CD4-positive, alpha-beta T cell (primary cell): ENCODE measurements at regions of chr6 and their contacts with region 1.

Region 1: DNA sequence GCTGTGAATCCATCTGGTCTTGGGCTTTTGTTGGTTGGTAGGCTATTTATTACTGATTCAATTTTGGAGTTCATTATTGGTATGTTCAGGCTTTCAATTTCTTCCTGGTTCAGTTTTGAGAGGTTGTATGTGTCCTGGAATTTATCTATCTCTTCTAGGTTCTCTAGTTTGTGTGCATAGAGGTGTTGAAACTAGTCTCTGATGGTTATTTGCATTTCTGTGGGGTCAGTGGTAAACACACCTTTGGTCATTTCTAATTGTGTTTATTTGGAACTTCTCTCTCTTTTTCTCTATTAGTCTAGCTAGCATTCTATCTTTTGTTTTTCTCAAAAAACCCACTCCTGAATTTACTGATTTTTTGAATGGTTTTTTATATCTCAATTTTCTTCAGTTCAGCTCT is 70.1 kb upstream of the IRAK1BP1 start:
- DNase-seq: no peak
- ATAC-seq: no peak
- H3K4me3 ChIP-seq: no peak overlapping the region
- H3K4me3 Mint-ChIP-seq: no peak overlapping the region
- H3K27ac ChIP-seq: no peak overlapping the region
- H3K27ac Mint-ChIP-seq: no peak overlapping the region
- H3K4me1 ChIP-seq: no peaks in the 10 kb centered on the region
- H3K4me1 Mint-ChIP-seq: no peaks in the 10 kb centered on the region
- H3K27me3 ChIP-seq: no peaks in the 10 kb centered on the region
- H3K27me3 Mint-ChIP-seq: no peaks in the 10 kb centered on the region
- CTCF ChIP-seq: no peak

Region 2: GRCh38 chr6:77324866-77325265 is 1472.4 kb before region 1 on chr6:
- CTCF ChIA-PET with region 1: no interaction called
- POLR2A ChIA-PET with region 1: no interaction called
- intact Hi-C with region 1: no loop called
- DNase-seq: no peak
- ATAC-seq: no peak
- H3K4me3 ChIP-seq: no peak overlapping the region
- H3K4me3 Mint-ChIP-seq: no peak overlapping the region
- H3K27ac ChIP-seq: no peak overlapping the region
- H3K27ac Mint-ChIP-seq: no peak overlapping the region
- H3K4me1 ChIP-seq: no peaks in the 10 kb centered on the region
- H3K4me1 Mint-ChIP-seq: no peaks in the 10 kb centered on the region
- H3K27me3 ChIP-seq: no peaks in the 10 kb centered on the region
- H3K27me3 Mint-ChIP-seq: no peaks in the 10 kb centered on the region
- CTCF ChIP-seq: no peak

Region 3: DNA sequence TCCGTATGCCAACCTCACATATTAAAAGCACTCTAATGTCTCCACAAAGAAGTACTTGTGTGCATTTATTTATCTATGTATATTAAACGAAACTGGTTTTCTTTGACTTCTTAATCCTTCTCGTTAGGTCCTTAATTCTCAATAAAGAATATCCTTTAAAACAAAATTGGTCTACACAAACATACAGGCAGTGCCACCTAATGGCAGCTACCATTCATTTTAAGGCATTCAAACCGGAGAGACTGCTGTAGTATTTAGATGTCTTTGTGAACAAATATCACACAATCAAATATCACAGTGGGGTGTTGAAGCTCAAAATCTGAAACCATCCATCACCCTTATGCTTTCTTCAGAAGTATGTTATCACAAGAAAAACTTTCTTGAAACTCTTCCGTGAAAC is 26.5 kb before region 1 on chr6:
- CTCF ChIA-PET with region 1: no interaction called
- POLR2A ChIA-PET with region 1: no interaction called
- intact Hi-C with region 1: loop called in 1 of 2 experiments (anchors 1 kb)
- DNase-seq: no peak
- ATAC-seq: no peak
- H3K4me3 ChIP-seq: no peak overlapping the region
- H3K4me3 Mint-ChIP-seq: no peak overlapping the region
- H3K27ac ChIP-seq: no peak overlapping the region
- H3K27ac Mint-ChIP-seq: no peak overlapping the region
- H3K4me1 ChIP-seq: no peaks in the 10 kb centered on the region
- H3K4me1 Mint-ChIP-seq: no peaks in the 10 kb centered on the region
- H3K27me3 ChIP-seq: no peaks in the 10 kb centered on the region
- H3K27me3 Mint-ChIP-seq: no peaks in the 10 kb centered on the region
- CTCF ChIP-seq: no peak